ENCODE measurements at regions of chr12 and their contacts with region 1.

Region 1: GRCh38 chr12:15979096-15980092 is 68.3 kb downstream of the DERA start:
- DNase-seq: peak; percentile 63
- H3K4me3 Mint-ChIP-seq: peak overlapping the region; percentile 53
- H3K27ac Mint-ChIP-seq: peak overlapping the region; percentile 91
- H3K4me1 Mint-ChIP-seq: peaks cover 33% of the 10 kb centered on the region
- H3K27me3 Mint-ChIP-seq: no peaks in the 10 kb centered on the region
- CTCF ChIP-seq: peak; percentile 83

Region 2: DNA sequence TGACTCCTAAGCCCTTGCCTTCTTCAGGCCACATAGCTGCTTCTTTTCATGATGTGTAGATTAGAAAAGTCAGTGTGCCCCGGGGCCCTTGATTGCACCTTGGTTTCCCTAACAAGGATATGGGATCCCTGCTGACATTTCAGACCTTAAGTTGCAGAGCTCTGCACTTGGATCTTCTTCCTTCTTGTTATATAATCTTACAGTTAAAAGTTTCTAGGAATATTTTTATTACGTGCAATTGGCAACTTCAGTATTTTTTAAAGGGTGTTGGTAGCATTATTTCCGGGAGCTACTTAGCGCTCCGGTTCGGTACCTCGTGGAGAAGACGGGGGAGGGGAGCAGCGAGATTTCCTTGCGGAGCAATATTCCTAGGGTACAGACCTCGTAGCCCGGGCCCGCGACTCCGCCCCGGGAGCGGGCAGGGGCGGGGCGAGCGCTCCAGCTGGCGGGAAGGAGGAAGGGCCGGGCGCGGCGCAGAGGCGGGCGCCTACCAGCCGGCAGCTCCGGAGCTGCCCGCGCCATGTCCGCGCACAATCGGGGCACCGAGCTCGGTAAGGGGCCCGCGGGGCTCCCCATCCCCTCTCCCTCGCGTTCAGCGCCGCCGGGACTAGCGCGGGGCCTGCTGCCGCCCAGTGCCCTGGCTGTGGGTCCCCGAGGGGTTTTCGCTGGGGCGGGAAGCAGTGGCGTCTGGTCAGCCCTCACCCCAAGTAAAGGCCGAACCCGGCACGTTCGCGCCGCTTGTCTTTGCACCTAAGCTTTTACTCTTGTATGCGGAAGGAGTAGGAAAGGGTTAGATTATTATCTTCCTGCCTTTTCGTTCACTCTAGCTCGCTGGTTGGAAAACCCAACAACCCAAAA is 68.3 kb before region 1 on chr12 and contains the start of gene DERA:
- CTCF ChIA-PET with region 1: no interaction called
- intact Hi-C with region 1: loop called (anchors 2 kb)
- DNase-seq: peak; percentile 90
- H3K4me3 Mint-ChIP-seq: peak within 1 kb of the TSS; percentile 71
- H3K27ac Mint-ChIP-seq: peak within 1 kb of the TSS; percentile 72
- H3K4me1 Mint-ChIP-seq: peaks cover 7% of the 10 kb centered on the region
- H3K27me3 Mint-ChIP-seq: no peaks in the 10 kb centered on the region
- CTCF ChIP-seq: no peak
- total RNA-seq, gene DERA: 29.8 and 31.0 TPM in 2 replicates

Region 3: DNA sequence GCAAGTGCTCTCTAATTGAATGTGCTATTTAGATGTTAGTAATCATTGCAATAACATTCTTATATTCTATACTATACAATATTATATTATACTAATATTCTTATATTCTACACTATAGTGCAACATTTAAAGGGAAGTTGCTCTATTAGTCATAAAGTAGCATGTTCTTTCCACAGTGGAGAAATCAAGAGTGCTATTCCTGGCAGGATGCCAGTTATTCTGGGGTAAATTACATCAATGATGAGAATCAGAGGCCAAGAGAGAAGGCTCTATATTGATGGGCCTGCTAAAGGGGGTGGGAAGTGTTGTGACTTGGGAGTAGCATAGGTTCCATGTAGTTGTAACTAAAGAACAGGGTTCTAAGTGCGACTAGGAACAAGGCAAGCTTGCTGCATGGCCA is 176.5 kb after region 1 on chr12:
- CTCF ChIA-PET with region 1: no interaction called
- intact Hi-C with region 1: no loop called
- DNase-seq: no peak
- H3K4me3 Mint-ChIP-seq: no peak overlapping the region
- H3K27ac Mint-ChIP-seq: no peak overlapping the region
- H3K4me1 Mint-ChIP-seq: no peaks in the 10 kb centered on the region
- H3K27me3 Mint-ChIP-seq: no peaks in the 10 kb centered on the region
- CTCF ChIP-seq: no peak

Region 4: GRCh38 chr12:16359512-16360491 is 380.4 kb after region 1 on chr12:
- CTCF ChIA-PET with region 1: no interaction called
- intact Hi-C with region 1: loop called (anchors 10 kb)
- DNase-seq: peak; percentile 75
- H3K4me3 Mint-ChIP-seq: no peak overlapping the region
- H3K27ac Mint-ChIP-seq: no peak overlapping the region
- H3K4me1 Mint-ChIP-seq: peaks cover 11% of the 10 kb centered on the region
- H3K27me3 Mint-ChIP-seq: no peaks in the 10 kb centered on the region
- CTCF ChIP-seq: peak; percentile 90

Measured in Calu3 (cell line).